ENCODE measurements at regions of chr20 and their contacts with region 1.

Region 1: GRCh38 chr20:24992487-24993205 is at the start of gene APMAP:
- DNase-seq: peak; percentile 97
- ATAC-seq: peak; percentile 91
- H3K4me3 ChIP-seq: peak within 1 kb of the TSS; percentile 73 to 96 (median 84)
- H3K4me3 Mint-ChIP-seq: peak within 1 kb of the TSS; percentile 96
- H3K27ac ChIP-seq: peak within 1 kb of the TSS; percentile 93 to 98
- H3K27ac Mint-ChIP-seq: peak within 1 kb of the TSS; percentile 97
- H3K4me1 ChIP-seq: peaks cover 15 to 29% of the 10 kb centered on the region in 2 donors
- H3K4me1 Mint-ChIP-seq: peaks cover 46% of the 10 kb centered on the region
- H3K27me3 ChIP-seq: no peaks in the 10 kb centered on the region
- H3K27me3 Mint-ChIP-seq: no peaks in the 10 kb centered on the region
- CTCF ChIP-seq: no peak
- total RNA-seq, gene APMAP: 28.0 and 28.2 TPM in 2 replicates

Region 2: GRCh38 chr20:24965065-24965929 is 27.3 kb before region 1 on chr20:
- CTCF ChIA-PET with region 1: no interaction called
- POLR2A ChIA-PET with region 1: no interaction called
- intact Hi-C with region 1: no loop called
- DNase-seq: no peak
- ATAC-seq: no peak
- H3K4me3 ChIP-seq: no peak overlapping the region
- H3K4me3 Mint-ChIP-seq: no peak overlapping the region
- H3K27ac ChIP-seq: no peak overlapping the region
- H3K27ac Mint-ChIP-seq: no peak overlapping the region
- H3K4me1 ChIP-seq: no peaks in the 10 kb centered on the region
- H3K4me1 Mint-ChIP-seq: no peaks in the 10 kb centered on the region
- H3K27me3 ChIP-seq: no peaks in the 10 kb centered on the region
- H3K27me3 Mint-ChIP-seq: no peaks in the 10 kb centered on the region
- CTCF ChIP-seq: no peak

Region 3: GRCh38 chr20:25032478-25033280 is 40.0 kb after region 1 on chr20:
- CTCF ChIA-PET with region 1: interaction called, 10 read pairs
- POLR2A ChIA-PET with region 1: no interaction called
- intact Hi-C with region 1: no loop called
- DNase-seq: no peak
- ATAC-seq: no peak
- H3K4me3 ChIP-seq: no peak overlapping the region
- H3K4me3 Mint-ChIP-seq: no peak overlapping the region
- H3K27ac ChIP-seq: no peak overlapping the region
- H3K27ac Mint-ChIP-seq: no peak overlapping the region
- H3K4me1 ChIP-seq: peaks cover 27% of the 10 kb centered on the region in 2 donors
- H3K4me1 Mint-ChIP-seq: peaks cover 40% of the 10 kb centered on the region
- H3K27me3 ChIP-seq: no peaks in the 10 kb centered on the region
- H3K27me3 Mint-ChIP-seq: no peaks in the 10 kb centered on the region
- CTCF ChIP-seq: no peak

Region 4: GRCh38 chr20:25057234-25058050 is 64.8 kb after region 1 on chr20:
- CTCF ChIA-PET with region 1: interaction called, 250 read pairs
- POLR2A ChIA-PET with region 1: interaction called, 11 read pairs
- intact Hi-C with region 1: loop called (anchors 1 kb)
- DNase-seq: peak; percentile 89
- ATAC-seq: peak; percentile 41
- H3K4me3 ChIP-seq: peak overlapping the region; percentile 45 to 91 (median 76)
- H3K4me3 Mint-ChIP-seq: peak overlapping the region; percentile 93
- H3K27ac ChIP-seq: peak overlapping the region; percentile 90 to 93
- H3K27ac Mint-ChIP-seq: peak overlapping the region; percentile 97
- H3K4me1 ChIP-seq: peaks cover 58 to 63% of the 10 kb centered on the region in 2 donors
- H3K4me1 Mint-ChIP-seq: peaks cover 60% of the 10 kb centered on the region
- H3K27me3 ChIP-seq: no peaks in the 10 kb centered on the region
- H3K27me3 Mint-ChIP-seq: no peaks in the 10 kb centered on the region
- CTCF ChIP-seq: no peak

Region 5: DNA sequence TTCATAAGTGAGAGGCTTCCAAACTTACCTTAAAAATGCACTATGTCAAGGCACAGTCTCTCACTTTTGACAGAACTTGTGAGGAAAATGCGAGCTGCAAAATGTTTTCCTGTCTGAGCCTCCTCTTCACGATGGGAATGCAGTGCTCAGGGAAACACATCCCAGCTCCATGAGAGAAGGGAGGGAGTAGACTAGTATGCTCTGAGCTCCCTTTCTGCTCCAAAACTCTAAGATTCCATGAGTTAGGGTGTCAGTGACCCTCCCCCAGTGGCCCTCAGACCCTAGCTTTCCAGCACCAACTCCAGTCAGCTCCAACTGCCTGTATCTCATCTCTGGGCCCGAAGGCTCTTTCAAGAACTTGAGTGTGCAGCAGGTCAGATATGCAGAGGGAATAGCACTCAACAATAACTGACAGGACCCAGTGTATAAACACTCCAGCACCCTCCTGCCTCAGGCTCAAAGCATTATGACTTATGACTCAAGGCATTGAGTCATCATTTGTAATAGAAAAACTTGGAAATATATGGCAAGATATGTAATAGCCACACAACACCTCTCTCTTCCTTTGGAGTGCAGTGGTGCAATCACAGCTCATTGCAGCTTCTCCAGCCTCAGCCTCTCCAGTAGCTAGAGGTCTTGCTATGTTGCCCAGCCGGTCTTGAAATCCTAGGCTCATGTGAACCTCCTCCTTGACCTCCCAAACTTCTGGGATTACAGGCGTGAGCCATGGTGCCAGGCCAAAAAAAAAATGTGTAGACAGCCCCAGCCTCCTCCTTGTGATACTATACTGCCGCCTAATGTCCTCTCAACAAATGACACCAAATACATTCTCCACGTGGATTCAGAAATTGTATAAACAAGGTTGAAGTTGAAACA is 186.2 kb after region 1 on chr20:
- CTCF ChIA-PET with region 1: interaction called, 8 read pairs
- POLR2A ChIA-PET with region 1: no interaction called
- intact Hi-C with region 1: loop called (anchors 1 kb)
- DNase-seq: peak; percentile 35
- ATAC-seq: no peak
- H3K4me3 ChIP-seq: no peak overlapping the region
- H3K4me3 Mint-ChIP-seq: no peak overlapping the region
- H3K27ac ChIP-seq: no peak overlapping the region
- H3K27ac Mint-ChIP-seq: no peak overlapping the region
- H3K4me1 ChIP-seq: no peaks in the 10 kb centered on the region
- H3K4me1 Mint-ChIP-seq: no peaks in the 10 kb centered on the region
- H3K27me3 ChIP-seq: no peaks in the 10 kb centered on the region
- H3K27me3 Mint-ChIP-seq: peaks cover 4% of the 10 kb centered on the region
- CTCF ChIP-seq: peak; percentile 67

Region 6: DNA sequence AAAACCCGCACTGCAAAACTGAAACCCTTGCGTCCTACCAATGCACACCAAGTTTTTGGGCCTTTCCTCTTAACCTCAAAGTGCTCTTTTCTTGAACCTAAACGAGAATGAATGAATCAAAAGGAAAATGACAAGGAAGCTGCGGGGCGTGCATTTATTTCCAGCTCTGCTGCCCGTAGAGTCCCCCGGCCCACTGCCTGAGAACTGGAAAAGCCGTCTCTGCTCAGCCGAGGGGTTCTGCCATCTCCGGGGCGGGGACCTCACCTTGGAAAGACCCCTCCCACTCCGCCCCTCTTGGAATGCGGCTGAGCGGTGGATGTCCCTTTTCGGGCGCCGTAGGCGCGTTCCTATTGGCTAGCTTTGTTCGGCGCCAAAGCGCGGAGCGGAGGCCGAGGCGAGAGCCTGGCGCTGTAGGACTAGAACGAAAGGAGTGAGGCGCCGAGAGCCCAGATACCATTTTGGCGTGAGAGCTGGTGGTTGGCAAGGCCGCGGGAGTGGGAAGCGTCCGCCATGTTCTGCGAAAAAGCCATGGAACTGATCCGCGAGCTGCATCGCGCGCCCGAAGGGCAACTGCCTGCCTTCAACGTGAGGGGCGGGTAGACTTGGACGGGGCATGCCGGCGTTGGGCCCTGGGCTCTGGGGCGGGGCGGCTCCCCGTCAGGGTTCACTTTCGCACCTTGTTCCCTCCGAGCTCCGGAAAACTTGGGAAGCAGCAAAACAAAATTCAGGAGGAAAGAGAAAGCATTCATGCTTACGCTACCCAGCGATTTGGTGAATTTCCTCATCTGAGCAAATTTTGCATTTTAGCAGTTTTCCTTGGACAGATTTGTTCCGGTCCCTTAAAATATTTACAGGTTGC is 414.9 kb after region 1 on chr20 and contains the start of gene GINS1:
- CTCF ChIA-PET with region 1: interaction called, 10 read pairs
- POLR2A ChIA-PET with region 1: no interaction called
- intact Hi-C with region 1: no loop called
- DNase-seq: peak; percentile 83
- ATAC-seq: peak; percentile 95
- H3K4me3 ChIP-seq: peak within 1 kb of the TSS; percentile 71 to 80 (median 74)
- H3K4me3 Mint-ChIP-seq: peak within 1 kb of the TSS; percentile 95
- H3K27ac ChIP-seq: peak within 1 kb of the TSS in 1 of 2 donors; percentile 69
- H3K27ac Mint-ChIP-seq: peak within 1 kb of the TSS; percentile 85
- H3K4me1 ChIP-seq: peaks cover 5 to 6% of the 10 kb centered on the region in 2 donors
- H3K4me1 Mint-ChIP-seq: peaks cover 12% of the 10 kb centered on the region
- H3K27me3 ChIP-seq: no peaks in the 10 kb centered on the region
- H3K27me3 Mint-ChIP-seq: no peaks in the 10 kb centered on the region
- CTCF ChIP-seq: no peak
- total RNA-seq, gene GINS1: 2.0 and 3.6 TPM in 2 replicates